CD8-positive, alpha-beta memory T cell (primary cell): ENCODE measurements at regions of chr7 and their contacts with region 1.

Region 1: GRCh38 chr7:139095194-139095659 is 14.3 kb downstream of the ZC3HAV1 start:
- DNase-seq: peak; percentile 65 to 95 (median 91)
- H3K4me3 ChIP-seq: peak overlapping the region; percentile 74
- H3K4me3 Mint-ChIP-seq: peak overlapping the region; percentile 77 to 92 (median 86)
- H3K27ac ChIP-seq: peak overlapping the region; percentile 40
- H3K27ac Mint-ChIP-seq: peak overlapping the region; percentile 74 to 99 (median 94)
- H3K4me1 ChIP-seq: peaks cover 82% of the 10 kb centered on the region
- H3K4me1 Mint-ChIP-seq: peaks cover 87 to 98% (median 97%) of the 10 kb centered on the region in 3 donors
- H3K27me3 ChIP-seq: no peaks in the 10 kb centered on the region
- H3K27me3 Mint-ChIP-seq: no peaks in the 10 kb centered on the region

Region 2: GRCh38 chr7:139011373-139011772 is 83.9 kb before region 1 on chr7:
- CTCF ChIA-PET with region 1: no interaction called
- POLR2A ChIA-PET with region 1: no interaction called
- DNase-seq: no peak
- H3K4me3 ChIP-seq: no peak overlapping the region
- H3K4me3 Mint-ChIP-seq: no peak overlapping the region
- H3K27ac ChIP-seq: no peak overlapping the region
- H3K27ac Mint-ChIP-seq: no peak overlapping the region
- H3K4me1 ChIP-seq: no peaks in the 10 kb centered on the region
- H3K4me1 Mint-ChIP-seq: no peaks in the 10 kb centered on the region
- H3K27me3 ChIP-seq: no peaks in the 10 kb centered on the region
- H3K27me3 Mint-ChIP-seq: peaks cover 5 to 28% of the 10 kb centered on the region in 2 donors

Region 3: GRCh38 chr7:139080905-139081304 is 14.3 kb before region 1 on chr7:
- CTCF ChIA-PET with region 1: interaction called, 40 read pairs
- POLR2A ChIA-PET with region 1: interaction called, 14 read pairs
- DNase-seq: no peak
- H3K4me3 ChIP-seq: no peak overlapping the region
- H3K4me3 Mint-ChIP-seq: peak overlapping the region in 5 of 7 donors; percentile 33 to 70 (median 44)
- H3K27ac ChIP-seq: no peak overlapping the region
- H3K27ac Mint-ChIP-seq: peak overlapping the region; percentile 68 to 93 (median 78)
- H3K4me1 ChIP-seq: peaks cover 75% of the 10 kb centered on the region
- H3K4me1 Mint-ChIP-seq: peaks cover 77 to 94% (median 88%) of the 10 kb centered on the region in 3 donors
- H3K27me3 ChIP-seq: no peaks in the 10 kb centered on the region
- H3K27me3 Mint-ChIP-seq: no peaks in the 10 kb centered on the region

Region 4: GRCh38 chr7:139109188-139109982 is 14.2 kb after region 1 on chr7 and contains the start of gene ZC3HAV1:
- CTCF ChIA-PET with region 1: interaction called, 29 read pairs
- POLR2A ChIA-PET with region 1: interaction called, 95 read pairs
- DNase-seq: peak; percentile 82 to 95 (median 91)
- H3K4me3 ChIP-seq: peak within 1 kb of the TSS; percentile 67
- H3K4me3 Mint-ChIP-seq: peak within 1 kb of the TSS; percentile 89 to 100 (median 99)
- H3K27ac ChIP-seq: peak within 1 kb of the TSS; percentile 94
- H3K27ac Mint-ChIP-seq: peak within 1 kb of the TSS; percentile 97 to 100 (median 99)
- H3K4me1 ChIP-seq: peaks cover 20% of the 10 kb centered on the region
- H3K4me1 Mint-ChIP-seq: peaks cover 31 to 45% (median 43%) of the 10 kb centered on the region in 3 donors
- H3K27me3 ChIP-seq: no peaks in the 10 kb centered on the region
- H3K27me3 Mint-ChIP-seq: peaks cover 0 to 17% of the 10 kb centered on the region in 2 donors
- total RNA-seq, gene ZC3HAV1: 89.9 to 92.8 TPM

Region 5: GRCh38 chr7:139133335-139134139 is 38.3 kb after region 1 on chr7:
- CTCF ChIA-PET with region 1: interaction called, 12 read pairs
- POLR2A ChIA-PET with region 1: interaction called, 6 read pairs
- DNase-seq: peak; percentile 69 to 91 (median 83)
- H3K4me3 ChIP-seq: peak overlapping the region; percentile 65
- H3K4me3 Mint-ChIP-seq: peak overlapping the region; percentile 80 to 92 (median 86)
- H3K27ac ChIP-seq: peak overlapping the region; percentile 45
- H3K27ac Mint-ChIP-seq: peak overlapping the region; percentile 77 to 94 (median 88)
- H3K4me1 ChIP-seq: peaks cover 8% of the 10 kb centered on the region
- H3K4me1 Mint-ChIP-seq: peaks cover 11 to 22% (median 17%) of the 10 kb centered on the region in 3 donors
- H3K27me3 ChIP-seq: no peaks in the 10 kb centered on the region
- H3K27me3 Mint-ChIP-seq: no peaks in the 10 kb centered on the region